ENCODE measurements at regions of chr18 and their contacts with region 1.

Region 1: DNA sequence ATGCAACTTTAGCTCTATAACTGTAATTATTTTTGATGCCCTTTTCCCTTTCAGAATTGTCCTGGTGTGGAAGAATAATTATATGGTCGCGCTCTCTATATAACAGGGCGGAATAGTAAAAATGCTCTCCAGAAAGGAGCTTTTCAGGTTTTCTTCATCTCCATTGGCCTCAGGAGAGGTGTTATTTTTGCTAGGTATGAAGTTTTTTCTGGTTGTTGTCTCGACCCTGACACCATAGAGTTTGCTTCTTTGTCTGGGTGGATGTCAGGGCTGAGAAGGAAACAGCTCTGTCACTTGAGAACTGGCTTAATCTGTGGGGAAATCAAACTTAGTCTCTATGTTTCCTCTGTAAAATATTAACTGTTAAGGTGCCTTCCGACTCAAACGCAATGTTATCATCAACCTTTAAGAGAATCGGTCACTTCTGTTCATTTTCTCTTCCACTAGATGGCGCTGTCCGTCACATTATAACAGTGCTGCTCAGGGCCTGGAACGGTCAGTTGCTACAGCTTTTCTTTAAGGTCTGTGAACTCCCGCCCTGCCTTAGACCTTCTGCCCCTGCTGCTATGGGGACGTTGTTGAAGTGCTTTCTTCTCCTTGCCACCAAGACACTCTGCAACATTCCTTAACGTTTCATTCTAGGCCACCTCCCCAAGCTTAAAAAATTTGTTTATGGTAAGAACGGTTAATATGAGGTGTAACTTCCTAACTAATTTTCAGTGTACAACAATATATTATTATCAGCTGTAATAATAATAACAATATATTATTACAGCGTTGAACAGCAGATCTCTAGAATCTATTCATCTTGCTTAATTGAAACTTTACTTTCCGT is 23.8 kb upstream of the SERPINB12 start:
- DNase-seq: peak in 4 of 5 donors; percentile 36 to 51 (median 42)
- ATAC-seq: peak in 3 of 4 donors; percentile 77 to 81 (median 81)
- H3K4me3 ChIP-seq: no peak overlapping the region
- H3K27ac ChIP-seq: no peak overlapping the region
- H3K4me1 ChIP-seq: no peaks in the 10 kb centered on the region
- H3K27me3 ChIP-seq: peaks cover 0 to 14% (median 0%) of the 10 kb centered on the region in 9 donors
- CTCF ChIP-seq: peak; percentile 55 to 86 (median 76)
- POLR2A ChIP-seq: no peak

Region 2: DNA sequence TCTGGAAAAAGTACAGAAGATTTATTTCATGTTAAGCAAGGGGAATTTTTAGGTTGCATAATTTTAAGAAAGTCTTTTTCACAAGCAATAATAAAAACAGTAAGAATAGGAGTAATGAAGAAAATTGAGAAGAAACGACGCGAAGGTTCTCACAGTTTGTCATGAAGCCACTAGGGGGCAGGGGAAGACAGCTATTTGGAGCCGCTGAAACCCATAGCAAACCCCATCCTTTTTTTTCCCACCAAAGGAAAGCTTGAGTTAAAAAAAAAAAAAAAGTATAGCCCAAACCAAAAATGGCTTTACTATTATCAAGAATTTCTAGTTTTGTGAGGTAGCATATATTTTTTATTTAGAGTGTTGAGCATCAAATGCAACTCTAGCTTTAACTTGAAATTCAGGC is 502.1 kb before region 1 on chr18:
- intact Hi-C with region 1: no loop called
- DNase-seq: peak in 2 of 5 donors; percentile 38 to 42
- ATAC-seq: peak in 3 of 4 donors; percentile 58 to 72 (median 65)
- H3K4me3 ChIP-seq: no peak overlapping the region
- H3K27ac ChIP-seq: no peak overlapping the region
- H3K4me1 ChIP-seq: no peaks in the 10 kb centered on the region
- H3K27me3 ChIP-seq: peaks cover 0 to 9% (median 0%) of the 10 kb centered on the region in 9 donors
- CTCF ChIP-seq: peak; percentile 65 to 89 (median 82)
- POLR2A ChIP-seq: no peak

Region 3: DNA sequence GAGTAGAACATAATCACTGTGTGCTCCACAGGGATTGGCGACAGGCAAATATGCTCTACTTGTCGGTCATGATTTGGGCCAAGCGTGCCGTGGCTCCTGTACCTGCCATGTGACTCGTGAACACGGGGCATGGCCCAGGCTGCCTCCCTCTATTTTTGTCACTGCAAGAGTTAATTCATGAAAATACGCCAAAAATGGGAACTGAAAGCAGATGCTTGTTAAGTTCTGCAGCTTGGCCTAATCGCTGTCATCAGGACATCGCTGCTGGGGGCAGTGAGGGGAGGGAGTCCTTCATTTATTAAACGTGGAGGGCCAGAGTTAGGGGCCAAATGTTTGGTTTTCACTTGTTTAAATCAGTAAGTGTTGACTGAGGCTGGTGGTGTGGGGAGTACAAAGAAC is 376.6 kb before region 1 on chr18:
- intact Hi-C with region 1: no loop called
- DNase-seq: peak in 1 of 5 donors; percentile 24
- ATAC-seq: no peak
- H3K4me3 ChIP-seq: no peak overlapping the region
- H3K27ac ChIP-seq: no peak overlapping the region
- H3K4me1 ChIP-seq: peaks cover 0 to 63% (median 28%) of the 10 kb centered on the region in 12 donors
- H3K27me3 ChIP-seq: no peaks in the 10 kb centered on the region
- CTCF ChIP-seq: no peak
- POLR2A ChIP-seq: no peak

Region 4: DNA sequence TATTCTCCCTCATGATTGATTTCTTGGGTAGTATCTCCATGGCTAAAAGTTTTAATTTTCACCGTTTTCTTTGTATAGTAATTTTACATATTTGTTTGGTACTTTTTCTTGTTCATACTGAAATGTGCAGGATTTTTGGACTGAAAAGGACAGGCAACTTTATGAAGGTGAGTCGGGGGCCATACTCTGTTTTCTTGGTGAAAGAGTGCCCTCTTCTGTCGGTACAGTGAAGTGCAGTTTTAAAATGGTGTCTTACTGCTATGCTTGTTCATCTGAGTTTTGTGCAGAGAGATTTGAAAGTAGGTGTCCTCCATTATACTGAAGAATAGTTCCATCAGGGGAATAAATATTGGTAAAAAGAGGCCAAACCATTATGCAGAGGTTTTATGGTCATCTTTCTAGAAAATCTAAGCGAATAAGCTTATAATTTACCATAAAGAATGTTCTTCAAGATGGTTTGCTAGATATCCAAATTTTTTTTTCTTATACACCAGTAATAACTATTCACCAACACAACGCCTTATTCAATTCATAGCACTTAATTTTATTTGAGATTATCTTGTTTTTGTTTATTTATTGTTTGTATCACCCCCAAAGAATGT is 60.1 kb after region 1 on chr18:
- intact Hi-C with region 1: loop called (anchors 1 to 5 kb)
- DNase-seq: no peak
- ATAC-seq: no peak
- H3K4me3 ChIP-seq: no peak overlapping the region
- H3K27ac ChIP-seq: no peak overlapping the region
- H3K4me1 ChIP-seq: no peaks in the 10 kb centered on the region
- H3K27me3 ChIP-seq: no peaks in the 10 kb centered on the region
- CTCF ChIP-seq: peak; percentile 47 to 72 (median 60)
- POLR2A ChIP-seq: no peak

Region 5: DNA sequence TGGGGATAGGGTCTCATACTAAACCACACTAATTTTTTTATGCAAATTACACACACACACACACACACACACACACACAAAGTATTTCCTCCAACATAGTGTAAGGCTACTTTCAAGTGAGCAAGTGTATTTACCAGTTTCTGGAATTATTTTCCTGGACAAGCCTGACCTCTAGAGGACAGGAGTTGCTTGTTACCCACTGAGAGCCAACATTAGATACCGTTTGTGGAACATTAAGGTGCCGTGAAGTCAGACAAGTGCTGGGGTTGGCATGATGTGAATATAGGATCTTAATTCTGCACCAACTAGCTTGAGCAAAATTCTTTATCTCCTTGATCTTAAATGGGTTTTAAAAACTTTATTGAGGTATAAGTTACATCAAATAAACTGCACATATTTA is 329.8 kb after region 1 on chr18:
- intact Hi-C with region 1: loop called (anchors 2 to 10 kb)
- DNase-seq: no peak
- ATAC-seq: no peak
- H3K4me3 ChIP-seq: no peak overlapping the region
- H3K27ac ChIP-seq: no peak overlapping the region
- H3K4me1 ChIP-seq: no peaks in the 10 kb centered on the region
- H3K27me3 ChIP-seq: peaks cover 0 to 6% (median 0%) of the 10 kb centered on the region in 9 donors
- CTCF ChIP-seq: peak in 7 of 12 donors; percentile 21 to 49 (median 38)
- POLR2A ChIP-seq: no peak

Region 6: DNA sequence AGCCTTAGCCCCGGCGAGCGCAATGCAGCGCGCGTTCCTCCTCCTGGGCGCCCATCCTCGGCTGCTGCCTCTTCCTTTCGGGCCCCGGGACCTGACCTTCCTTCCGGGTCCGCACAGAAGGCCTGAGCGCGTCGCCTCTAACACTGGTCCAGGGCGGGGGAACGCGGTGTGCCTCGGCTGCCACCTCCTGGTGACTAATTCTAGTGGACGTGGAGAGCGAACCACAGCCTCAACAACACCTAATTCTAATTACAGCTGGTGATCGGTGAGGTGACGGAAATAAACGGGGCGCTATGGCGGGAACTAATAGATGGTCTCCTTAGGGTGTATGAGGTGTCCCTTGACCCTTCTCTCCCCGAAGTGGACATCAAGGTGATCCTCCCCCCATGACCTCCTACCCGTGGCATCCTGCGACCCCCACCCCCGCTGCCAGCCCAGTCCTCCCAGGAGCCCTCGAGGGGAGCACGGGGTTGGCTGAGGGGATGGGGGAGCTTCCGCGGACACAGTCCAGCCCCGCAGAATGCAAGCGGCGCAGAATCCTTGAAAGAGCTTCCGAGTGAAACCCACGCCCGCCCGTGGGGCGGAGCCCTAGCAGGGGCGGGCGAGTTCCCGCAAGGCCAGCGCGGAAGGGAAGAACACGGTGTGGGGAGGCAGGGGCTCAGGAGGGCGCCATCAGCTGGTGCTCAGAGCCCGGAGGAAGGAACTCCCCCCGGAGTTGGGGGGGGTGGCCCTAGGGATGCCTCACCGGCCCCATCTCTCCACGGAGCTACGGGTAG is 417.9 kb after region 1 on chr18:
- intact Hi-C with region 1: loop called in 9 of 10 experiments (anchors 1 to 5 kb)
- DNase-seq: peak; percentile 76 to 94 (median 85)
- ATAC-seq: peak; percentile 93 to 99 (median 99)
- H3K4me3 ChIP-seq: peak overlapping the region in 11 of 12 donors; percentile 27 to 66 (median 52)
- H3K27ac ChIP-seq: no peak overlapping the region
- H3K4me1 ChIP-seq: peaks cover 0 to 13% (median 3%) of the 10 kb centered on the region in 12 donors
- H3K27me3 ChIP-seq: peaks cover 0 to 51% (median 9%) of the 10 kb centered on the region in 9 donors
- CTCF ChIP-seq: peak; percentile 50 to 77 (median 62)
- POLR2A ChIP-seq: no peak

Region 7: DNA sequence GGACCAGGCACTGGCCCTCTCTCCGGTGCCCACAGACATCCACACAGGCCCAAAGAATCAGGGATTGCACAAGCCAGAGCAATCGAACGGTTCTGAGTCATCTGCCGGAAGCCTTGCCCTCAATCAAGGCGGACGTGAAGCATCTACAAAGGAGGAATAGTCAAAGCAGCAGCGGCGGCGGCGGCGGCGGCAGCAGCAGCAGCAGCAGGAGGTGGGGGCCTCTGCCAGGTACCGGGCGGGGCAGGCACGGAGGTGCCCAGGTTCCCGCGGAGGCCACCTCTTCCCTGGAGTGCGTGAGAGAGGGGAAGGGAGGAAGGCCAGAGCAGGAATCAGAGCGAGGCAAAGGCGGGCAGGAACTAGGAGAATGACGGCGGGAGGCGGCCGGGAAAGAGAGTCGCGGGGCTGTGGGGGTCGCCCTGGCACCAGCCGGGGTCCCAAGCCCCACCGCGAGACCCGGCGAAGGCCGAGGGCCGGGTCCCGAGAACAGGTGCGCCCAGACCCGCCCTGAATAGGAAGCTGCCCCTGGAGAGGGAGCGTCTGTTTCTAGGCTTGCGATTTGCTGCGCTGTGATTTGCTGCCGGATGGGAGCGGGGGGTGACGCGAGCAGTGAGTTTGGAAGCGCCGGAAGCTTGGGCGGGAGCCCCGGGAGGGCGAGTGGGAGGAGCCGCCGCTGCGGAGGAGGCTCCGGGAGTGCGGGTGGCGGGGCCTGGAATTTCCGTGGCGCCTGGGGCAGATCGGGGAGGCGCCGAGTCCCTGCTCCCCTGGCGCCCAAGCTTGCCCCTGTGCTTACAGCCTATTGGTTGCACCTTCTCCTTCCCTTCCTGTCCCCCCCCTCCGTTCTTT is 451.8 kb after region 1 on chr18 and contains the start of gene SERPINB8:
- intact Hi-C with region 1: loop called in 3 of 10 experiments (anchors 5 to 10 kb)
- DNase-seq: peak; percentile 94 to 96 (median 95)
- ATAC-seq: peak; percentile 96 to 99 (median 98)
- H3K4me3 ChIP-seq: peak within 1 kb of the TSS; percentile 53 to 98 (median 84)
- H3K27ac ChIP-seq: peak within 1 kb of the TSS; percentile 58 to 98 (median 93)
- H3K4me1 ChIP-seq: peaks cover 0 to 31% (median 9%) of the 10 kb centered on the region in 12 donors
- H3K27me3 ChIP-seq: no peaks in the 10 kb centered on the region
- CTCF ChIP-seq: no peak
- POLR2A ChIP-seq: peak in 1 of 2 donors; percentile 85
- total RNA-seq, gene SERPINB8: 1.3 to 10.3 (median 3.5) TPM

Region 8: DNA sequence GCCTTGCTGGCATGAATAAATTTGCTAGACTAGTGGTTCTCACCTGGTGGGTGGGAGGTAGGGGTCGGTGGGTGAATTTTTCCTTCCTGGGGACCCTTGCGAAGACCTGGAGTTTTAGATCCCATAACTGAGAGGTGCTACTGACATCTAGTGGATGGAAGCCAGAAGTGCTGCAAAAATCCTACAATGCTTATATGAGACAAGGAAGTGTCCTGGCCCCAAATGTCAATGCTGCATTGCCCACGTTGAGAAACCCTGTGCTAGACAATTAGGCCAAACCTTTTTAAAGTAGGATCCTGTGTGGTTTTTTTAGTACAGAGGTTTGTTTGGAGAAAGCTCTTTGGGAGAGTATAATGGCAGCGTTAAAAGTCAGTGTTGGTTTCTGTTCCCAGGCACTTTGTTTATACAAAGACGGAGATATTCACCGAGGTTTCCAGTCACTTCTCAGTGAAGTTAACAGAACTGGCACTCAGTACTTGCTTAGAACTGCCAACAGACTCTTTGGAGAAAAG is 461.1 kb after region 1 on chr18:
- intact Hi-C with region 1: loop called in 4 of 10 experiments (anchors 5 to 10 kb)
- DNase-seq: peak in 2 of 5 donors; percentile 34 to 43
- ATAC-seq: peak in 3 of 4 donors; percentile 75 to 78 (median 78)
- H3K4me3 ChIP-seq: peak overlapping the region in 7 of 12 donors; percentile 0 to 46 (median 20)
- H3K27ac ChIP-seq: peak overlapping the region in 4 of 12 donors; percentile 8 to 58 (median 24)
- H3K4me1 ChIP-seq: peaks cover 0 to 34% (median 3%) of the 10 kb centered on the region in 12 donors
- H3K27me3 ChIP-seq: no peaks in the 10 kb centered on the region
- CTCF ChIP-seq: peak; percentile 67 to 91 (median 84)
- POLR2A ChIP-seq: no peak

Region 9: DNA sequence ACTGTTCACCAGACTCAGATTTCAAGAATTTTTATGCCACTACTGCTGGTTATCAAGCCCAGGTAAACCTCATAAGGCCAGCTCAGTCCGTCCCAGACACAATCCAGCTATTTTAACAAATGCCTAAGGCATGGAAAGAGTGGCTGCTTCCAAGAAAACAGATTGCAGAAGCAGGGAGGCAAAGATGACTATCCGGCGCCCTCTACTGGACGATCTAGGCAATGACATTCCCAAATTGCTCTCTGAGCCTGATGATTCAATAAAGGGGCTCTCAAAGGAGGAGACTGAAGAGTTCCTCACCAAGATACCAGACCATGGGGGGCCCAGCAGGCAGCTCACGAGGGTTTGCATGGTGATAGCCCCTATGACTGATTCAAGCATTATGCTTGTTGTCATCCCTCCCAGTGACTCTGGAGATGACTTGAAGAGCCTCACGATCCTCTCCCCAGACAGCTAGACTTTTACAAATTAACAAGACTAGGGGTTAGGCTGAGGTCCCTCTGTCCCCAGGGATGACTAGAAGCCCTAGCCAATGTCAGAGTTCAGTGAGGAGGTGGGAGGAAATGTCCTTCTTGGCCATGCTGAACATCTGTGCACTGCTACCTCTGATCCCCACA is 476.5 kb after region 1 on chr18:
- intact Hi-C with region 1: loop called in 3 of 10 experiments (anchors 5 to 10 kb)
- DNase-seq: peak in 1 of 5 donors; percentile 44
- ATAC-seq: peak in 2 of 4 donors; percentile 50 to 52
- H3K4me3 ChIP-seq: no peak overlapping the region
- H3K27ac ChIP-seq: no peak overlapping the region
- H3K4me1 ChIP-seq: no peaks in the 10 kb centered on the region
- H3K27me3 ChIP-seq: no peaks in the 10 kb centered on the region
- CTCF ChIP-seq: peak; percentile 77 to 91 (median 82)
- POLR2A ChIP-seq: no peak